CD8-positive, alpha-beta T cell (primary cell): ENCODE measurements at regions of chr20 and their contacts with region 1.

Region 1: DNA sequence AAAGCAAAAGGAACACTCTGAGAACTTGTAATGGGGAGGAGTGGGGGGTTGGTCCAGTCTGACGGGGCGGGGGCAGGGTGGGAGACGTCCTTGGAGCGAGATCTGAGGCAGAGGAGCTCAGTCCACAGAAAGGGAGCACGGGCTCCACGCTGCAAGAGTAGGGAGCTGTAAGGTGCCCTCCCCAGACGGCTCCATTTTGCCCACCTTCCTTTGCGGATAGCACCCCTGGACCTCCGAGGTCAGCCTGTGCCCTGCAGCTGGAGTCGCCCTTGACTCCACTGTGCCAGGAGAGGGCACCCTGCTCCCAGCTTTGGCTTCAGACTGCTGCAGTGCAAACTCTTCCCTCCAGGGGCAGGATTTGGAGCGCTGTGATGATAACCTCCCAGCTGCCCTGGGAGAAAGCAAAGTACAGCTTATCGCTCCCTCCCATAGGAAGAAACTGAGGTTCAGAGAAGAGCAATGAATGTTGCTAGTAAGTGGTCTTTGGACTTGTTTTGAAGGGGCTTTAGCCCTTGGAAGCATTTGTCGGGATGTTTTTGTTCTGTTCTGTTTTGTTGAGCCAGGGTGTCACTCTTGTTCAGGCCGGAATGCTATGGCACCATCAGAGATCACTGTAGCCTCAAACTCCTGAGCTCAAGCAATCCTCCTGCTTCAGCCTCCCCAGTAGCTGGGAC is 9.5 kb upstream of the AHCY start:
- DNase-seq: peak; percentile 74 to 92 (median 86)
- ATAC-seq: peak; percentile 100
- H3K4me3 ChIP-seq: no peak overlapping the region
- H3K4me3 Mint-ChIP-seq: peak overlapping the region; percentile 39
- H3K27ac ChIP-seq: no peak overlapping the region
- H3K27ac Mint-ChIP-seq: no peak overlapping the region
- H3K4me1 ChIP-seq: peaks cover 9% of the 10 kb centered on the region
- H3K4me1 Mint-ChIP-seq: peaks cover 5% of the 10 kb centered on the region
- H3K27me3 ChIP-seq: peaks cover 9 to 11% of the 10 kb centered on the region in 2 experiments
- H3K27me3 Mint-ChIP-seq: peaks cover 20% of the 10 kb centered on the region
- CTCF ChIP-seq: peak; percentile 99

Region 2: GRCh38 chr20:34295284-34295683 is 17.4 kb before region 1 on chr20:
- CTCF ChIA-PET with region 1: interaction called, 12 read pairs
- POLR2A ChIA-PET with region 1: no interaction called
- intact Hi-C with region 1: no loop called
- DNase-seq: no peak
- ATAC-seq: no peak
- H3K4me3 ChIP-seq: no peak overlapping the region
- H3K4me3 Mint-ChIP-seq: no peak overlapping the region
- H3K27ac ChIP-seq: no peak overlapping the region
- H3K27ac Mint-ChIP-seq: no peak overlapping the region
- H3K4me1 ChIP-seq: no peaks in the 10 kb centered on the region
- H3K4me1 Mint-ChIP-seq: peaks cover 2% of the 10 kb centered on the region
- H3K27me3 ChIP-seq: no peaks in the 10 kb centered on the region
- H3K27me3 Mint-ChIP-seq: no peaks in the 10 kb centered on the region
- CTCF ChIP-seq: no peak

Region 3: DNA sequence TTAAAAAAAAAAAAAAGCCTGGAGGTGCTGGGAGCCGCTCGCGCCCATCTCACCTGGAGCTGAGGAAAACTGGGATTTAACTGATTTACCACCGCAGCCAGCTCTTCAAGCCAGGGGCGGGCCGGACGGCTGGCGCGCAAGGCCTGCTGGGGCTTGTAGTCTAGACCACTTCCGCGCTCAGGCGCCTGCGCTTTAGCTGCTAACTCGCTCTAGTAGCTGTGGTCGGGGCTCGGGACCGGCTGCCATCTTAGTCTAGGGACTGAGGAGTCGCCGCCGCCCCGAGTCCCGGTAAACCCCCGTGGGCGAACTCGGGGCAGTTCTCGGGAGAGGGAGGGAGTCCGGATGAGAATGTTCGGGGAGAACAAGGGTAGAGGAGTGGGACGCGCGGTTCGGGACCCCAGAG is 50.4 kb after region 1 on chr20 and contains the start of gene ITCH:
- CTCF ChIA-PET with region 1: interaction called, 19 read pairs
- POLR2A ChIA-PET with region 1: interaction called, 5 read pairs
- intact Hi-C with region 1: no loop called
- DNase-seq: peak; percentile 80 to 96 (median 93)
- ATAC-seq: peak; percentile 99
- H3K4me3 ChIP-seq: peak within 1 kb of the TSS; percentile 92 to 93
- H3K4me3 Mint-ChIP-seq: peak within 1 kb of the TSS; percentile 99
- H3K27ac ChIP-seq: peak within 1 kb of the TSS; percentile 86 to 91
- H3K27ac Mint-ChIP-seq: peak within 1 kb of the TSS; percentile 99
- H3K4me1 ChIP-seq: peaks cover 40% of the 10 kb centered on the region
- H3K4me1 Mint-ChIP-seq: peaks cover 45% of the 10 kb centered on the region
- H3K27me3 ChIP-seq: no peaks in the 10 kb centered on the region
- H3K27me3 Mint-ChIP-seq: no peaks in the 10 kb centered on the region
- CTCF ChIP-seq: no peak
- total RNA-seq, gene ITCH: 50.4 to 55.2 TPM

Region 4: DNA sequence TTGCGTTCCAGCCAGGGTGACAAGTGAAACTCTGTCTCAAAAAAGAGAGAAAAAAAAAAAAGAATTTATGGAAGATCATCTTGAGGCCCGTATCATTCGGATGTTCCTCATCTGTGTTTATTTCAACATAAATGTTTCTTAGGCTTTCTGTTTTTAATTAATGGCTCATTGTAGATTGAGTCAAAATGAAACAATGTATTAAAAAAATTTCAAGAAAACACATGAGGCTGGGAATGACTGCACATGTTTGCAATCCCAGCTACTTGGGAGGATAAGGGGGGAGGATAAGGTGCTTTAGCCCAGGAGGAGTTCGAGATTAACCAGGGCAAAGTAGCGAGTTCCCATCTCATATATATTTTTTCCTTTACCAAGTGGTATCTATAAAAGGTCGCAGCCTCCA is 97.7 kb after region 1 on chr20:
- CTCF ChIA-PET with region 1: interaction called, 12 read pairs
- POLR2A ChIA-PET with region 1: no interaction called
- intact Hi-C with region 1: loop called in 1 of 2 experiments (anchors 5 kb)
- DNase-seq: no peak
- ATAC-seq: no peak
- H3K4me3 ChIP-seq: no peak overlapping the region
- H3K4me3 Mint-ChIP-seq: no peak overlapping the region
- H3K27ac ChIP-seq: no peak overlapping the region
- H3K27ac Mint-ChIP-seq: no peak overlapping the region
- H3K4me1 ChIP-seq: peaks cover 9% of the 10 kb centered on the region
- H3K4me1 Mint-ChIP-seq: peaks cover 33% of the 10 kb centered on the region
- H3K27me3 ChIP-seq: no peaks in the 10 kb centered on the region
- H3K27me3 Mint-ChIP-seq: no peaks in the 10 kb centered on the region
- CTCF ChIP-seq: no peak

Region 5: DNA sequence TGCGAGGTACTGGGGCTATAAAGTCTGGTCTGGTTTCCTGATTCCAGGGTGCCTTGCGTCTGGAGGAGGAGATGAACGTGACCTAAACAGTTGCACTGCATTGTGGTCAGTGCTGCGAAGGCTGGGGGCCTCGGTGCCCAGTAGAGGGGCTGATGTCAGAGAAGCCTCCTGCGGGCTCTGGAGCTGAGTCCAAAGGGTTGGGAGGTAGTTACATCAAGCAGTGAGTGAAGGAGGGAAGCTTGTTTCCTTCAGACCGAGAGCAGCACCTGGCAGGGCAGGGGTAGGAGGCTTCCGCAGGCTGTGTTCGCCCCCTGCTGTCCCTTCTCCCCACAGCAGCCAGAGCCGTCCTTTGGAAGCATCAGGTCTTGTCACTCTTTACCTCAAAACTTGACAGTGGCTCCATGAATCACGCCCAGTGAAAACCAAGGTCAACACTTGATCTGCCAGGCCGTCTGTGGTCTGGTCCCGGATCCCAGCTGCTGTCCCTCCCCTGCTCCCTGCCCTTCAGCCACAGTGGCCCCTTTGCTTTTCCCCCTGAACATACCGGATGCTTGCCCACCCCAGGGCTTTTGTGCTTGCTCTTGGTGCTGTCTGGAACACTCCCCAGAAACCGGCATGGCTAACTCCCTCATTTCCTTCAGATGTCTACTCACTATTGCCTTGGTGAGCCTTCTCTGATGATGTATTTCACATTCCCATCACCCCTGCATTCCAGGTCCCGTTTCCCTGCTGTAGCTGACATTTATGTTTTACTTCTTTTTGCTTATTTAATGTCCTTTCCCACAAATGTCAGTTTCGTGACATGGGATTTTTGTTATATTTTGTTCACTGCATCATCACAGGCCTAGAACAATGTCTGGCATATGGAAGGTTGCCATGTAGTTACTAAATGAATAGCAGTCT is 210.5 kb after region 1 on chr20:
- CTCF ChIA-PET with region 1: interaction called, 37 read pairs
- POLR2A ChIA-PET with region 1: no interaction called
- intact Hi-C with region 1: loop called (anchors 1 kb)
- DNase-seq: peak in 8 of 9 experiments; percentile 30 to 69 (median 58)
- ATAC-seq: peak; percentile 83
- H3K4me3 ChIP-seq: no peak overlapping the region
- H3K4me3 Mint-ChIP-seq: no peak overlapping the region
- H3K27ac ChIP-seq: no peak overlapping the region
- H3K27ac Mint-ChIP-seq: no peak overlapping the region
- H3K4me1 ChIP-seq: peaks cover 13% of the 10 kb centered on the region
- H3K4me1 Mint-ChIP-seq: peaks cover 55% of the 10 kb centered on the region
- H3K27me3 ChIP-seq: no peaks in the 10 kb centered on the region
- H3K27me3 Mint-ChIP-seq: no peaks in the 10 kb centered on the region
- CTCF ChIP-seq: peak; percentile 45

Region 6: DNA sequence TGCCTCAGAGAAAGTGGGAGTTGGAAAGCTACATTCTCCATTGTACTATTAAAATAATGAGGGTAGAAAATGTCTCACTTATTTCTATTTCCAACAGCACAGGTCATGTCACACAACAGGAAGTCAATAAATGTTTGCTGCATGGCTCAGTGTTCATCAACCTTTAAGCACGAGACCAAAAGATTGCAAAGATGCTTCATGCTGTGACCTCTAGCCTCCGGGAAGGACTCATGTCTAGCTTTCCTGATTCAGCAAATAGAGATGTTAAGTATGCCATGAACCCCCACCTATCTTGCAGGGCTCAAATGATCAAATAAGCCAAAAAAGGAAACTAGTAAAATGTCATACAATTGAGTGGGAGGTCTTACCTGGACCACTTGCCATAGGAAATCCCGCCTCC is 455.4 kb after region 1 on chr20:
- CTCF ChIA-PET with region 1: interaction called, 102 read pairs
- POLR2A ChIA-PET with region 1: interaction called, 6 read pairs
- intact Hi-C with region 1: loop called in 1 of 2 experiments (anchors 1 kb)
- DNase-seq: no peak
- ATAC-seq: no peak
- H3K4me3 ChIP-seq: no peak overlapping the region
- H3K4me3 Mint-ChIP-seq: no peak overlapping the region
- H3K27ac ChIP-seq: no peak overlapping the region
- H3K27ac Mint-ChIP-seq: no peak overlapping the region
- H3K4me1 ChIP-seq: no peaks in the 10 kb centered on the region
- H3K4me1 Mint-ChIP-seq: no peaks in the 10 kb centered on the region
- H3K27me3 ChIP-seq: no peaks in the 10 kb centered on the region
- H3K27me3 Mint-ChIP-seq: no peaks in the 10 kb centered on the region
- CTCF ChIP-seq: no peak